A673 (cell line): ENCODE measurements at regions of chr6 and their contacts with region 1.

Region 1: DNA sequence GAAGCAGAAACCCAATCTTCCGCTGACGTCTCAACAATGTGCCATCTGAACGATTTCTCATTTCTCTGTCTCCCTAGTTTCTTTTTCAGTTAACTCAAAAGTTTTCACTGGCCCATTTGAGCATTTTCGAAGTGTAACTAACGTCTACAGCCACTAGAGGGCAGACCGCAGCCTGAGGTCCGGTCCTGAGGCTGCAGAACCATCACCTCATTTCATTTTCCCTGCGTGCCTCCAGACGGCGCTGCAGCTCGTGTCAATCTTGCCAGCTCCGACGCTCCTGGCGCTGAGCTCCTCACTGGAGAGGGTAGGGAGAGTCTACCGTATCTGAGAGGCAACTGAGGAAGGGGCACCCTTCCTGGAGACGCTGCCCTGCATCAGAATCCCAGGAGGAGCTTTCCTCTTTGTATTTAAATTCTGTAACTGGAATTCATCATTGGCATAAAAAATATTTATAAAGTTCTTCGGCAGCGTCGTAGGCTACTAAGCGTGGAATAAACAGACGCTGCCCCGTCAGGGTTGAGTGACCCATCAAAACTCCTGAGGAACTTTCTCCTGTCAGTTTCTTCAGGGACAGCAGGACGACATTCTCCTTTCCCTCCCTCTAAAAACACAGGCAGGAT is 28.5 kb upstream of the DTNBP1 start:
- DNase-seq: peak; percentile 93
- H3K4me3 ChIP-seq: peak overlapping the region; percentile 27
- H3K27ac ChIP-seq: no peak overlapping the region
- H3K4me1 ChIP-seq: no peaks in the 10 kb centered on the region
- H3K27me3 ChIP-seq: no peaks in the 10 kb centered on the region
- CTCF ChIP-seq: peak; percentile 100

Region 2: DNA sequence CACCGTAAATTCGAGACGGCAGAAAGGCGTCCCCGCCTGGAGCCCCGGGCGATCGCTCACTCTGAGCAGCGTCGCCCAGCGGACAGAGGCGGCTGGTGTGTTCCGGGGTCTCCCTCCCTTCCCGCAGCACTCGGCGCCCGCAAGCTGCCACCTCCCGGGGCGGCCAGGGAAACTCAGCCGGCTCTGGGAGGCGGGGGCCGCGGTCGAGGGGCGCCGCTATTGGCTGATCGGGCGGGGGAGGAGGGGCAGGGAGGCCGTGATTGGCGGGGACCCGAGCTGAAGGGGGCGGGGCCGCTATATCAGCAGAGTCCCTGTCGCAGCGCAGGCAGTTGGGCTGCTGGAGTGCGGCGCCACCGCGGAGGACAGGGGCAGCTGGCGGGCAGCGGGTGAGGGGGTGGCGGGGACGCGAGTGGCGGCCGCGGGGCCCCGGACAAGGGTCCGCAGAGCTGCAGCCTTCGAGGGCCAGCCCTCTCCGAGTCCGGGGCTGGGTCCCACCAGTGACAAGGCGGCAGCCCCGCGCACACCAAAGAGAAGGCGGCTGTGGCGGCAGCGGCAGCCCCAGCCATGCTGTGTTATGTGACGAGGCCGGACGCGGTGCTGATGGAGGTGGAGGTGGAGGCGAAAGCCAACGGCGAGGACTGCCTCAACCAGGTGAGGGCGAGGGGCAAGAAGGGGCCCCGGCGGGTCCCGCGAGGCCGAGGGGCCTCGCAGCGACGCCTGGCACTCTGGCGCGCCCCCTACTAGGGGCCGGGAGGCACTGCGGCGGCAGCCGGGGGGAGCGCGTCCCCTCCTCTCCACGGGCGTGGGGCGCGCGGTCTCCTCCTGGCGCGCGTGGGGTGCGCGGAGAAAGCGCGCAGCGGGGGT is 437.6 kb after region 1 on chr6 and contains the start of gene MYLIP:
- CTCF ChIA-PET with region 1: interaction called, 5 read pairs
- POLR2A ChIA-PET with region 1: no interaction called
- intact Hi-C with region 1: loop called (anchors 2 kb)
- DNase-seq: peak; percentile 98
- H3K4me3 ChIP-seq: peak within 1 kb of the TSS; percentile 96
- H3K27ac ChIP-seq: peak within 1 kb of the TSS; percentile 95
- H3K4me1 ChIP-seq: peaks cover 22% of the 10 kb centered on the region
- H3K27me3 ChIP-seq: no peaks in the 10 kb centered on the region
- CTCF ChIP-seq: peak; percentile 75
- total RNA-seq, gene MYLIP: 22.4 and 24.5 TPM in 2 replicates

Region 3: GRCh38 chr6:16168858-16169257 is 477.5 kb after region 1 on chr6:
- CTCF ChIA-PET with region 1: no interaction called
- POLR2A ChIA-PET with region 1: no interaction called
- intact Hi-C with region 1: loop called (anchors 2 kb)
- DNase-seq: peak; percentile 62
- H3K4me3 ChIP-seq: no peak overlapping the region
- H3K27ac ChIP-seq: no peak overlapping the region
- H3K4me1 ChIP-seq: peaks cover 4% of the 10 kb centered on the region
- H3K27me3 ChIP-seq: no peaks in the 10 kb centered on the region
- CTCF ChIP-seq: peak; percentile 69

Region 4: GRCh38 chr6:16183187-16183664 is 491.9 kb after region 1 on chr6:
- CTCF ChIA-PET with region 1: interaction called, 33 read pairs
- POLR2A ChIA-PET with region 1: no interaction called
- intact Hi-C with region 1: loop called (anchors 1 kb)
- DNase-seq: peak; percentile 61
- H3K4me3 ChIP-seq: no peak overlapping the region
- H3K27ac ChIP-seq: no peak overlapping the region
- H3K4me1 ChIP-seq: no peaks in the 10 kb centered on the region
- H3K27me3 ChIP-seq: no peaks in the 10 kb centered on the region
- CTCF ChIP-seq: peak; percentile 74

Region 5: GRCh38 chr6:16206595-16207037 is 515.3 kb after region 1 on chr6:
- CTCF ChIA-PET with region 1: interaction called, 11 read pairs
- POLR2A ChIA-PET with region 1: no interaction called
- intact Hi-C with region 1: loop called (anchors 1 kb)
- DNase-seq: peak; percentile 87
- H3K4me3 ChIP-seq: no peak overlapping the region
- H3K27ac ChIP-seq: no peak overlapping the region
- H3K4me1 ChIP-seq: peaks cover 16% of the 10 kb centered on the region
- H3K27me3 ChIP-seq: no peaks in the 10 kb centered on the region
- CTCF ChIP-seq: peak; percentile 95

Region 6: DNA sequence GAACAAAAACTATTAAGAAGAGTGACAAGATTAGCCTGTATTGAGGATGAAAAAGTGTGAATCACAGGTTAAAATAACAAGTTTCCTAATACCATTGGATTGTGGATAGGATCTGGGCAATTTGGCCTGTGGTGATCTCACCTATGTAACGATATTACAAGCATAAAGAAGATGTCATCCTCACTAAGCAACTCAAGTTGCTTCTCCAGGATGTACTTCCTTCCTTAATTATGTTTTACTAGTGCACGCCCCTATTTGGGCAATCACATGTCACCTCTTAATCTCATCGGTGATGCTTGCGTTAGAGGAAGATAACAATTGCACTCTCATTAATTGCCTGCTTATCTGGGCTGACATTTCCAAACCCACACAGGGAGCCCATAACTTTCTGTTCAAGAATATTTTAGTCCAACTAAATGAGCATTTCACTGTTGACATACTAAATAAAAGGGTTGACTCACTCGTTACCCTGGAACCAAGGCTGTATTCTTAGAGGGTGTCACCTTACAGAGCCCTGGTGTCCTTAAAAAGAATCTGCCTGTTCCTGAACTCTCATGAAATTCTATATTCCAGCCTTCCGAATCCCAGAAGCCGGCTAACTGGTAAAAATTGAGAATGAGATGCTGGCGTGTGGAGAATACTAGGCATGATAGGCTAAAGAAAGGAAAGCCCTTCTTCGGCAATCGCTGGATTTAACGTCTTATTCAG is 1158.1 kb after region 1 on chr6:
- CTCF ChIA-PET with region 1: no interaction called
- POLR2A ChIA-PET with region 1: no interaction called
- intact Hi-C with region 1: no loop called
- DNase-seq: peak; percentile 69
- H3K4me3 ChIP-seq: no peak overlapping the region
- H3K27ac ChIP-seq: peak overlapping the region; percentile 59
- H3K4me1 ChIP-seq: peaks cover 41% of the 10 kb centered on the region
- H3K27me3 ChIP-seq: no peaks in the 10 kb centered on the region
- CTCF ChIP-seq: no peak